Sigmoid colon (tissue), 7 donors: ENCODE measurements at regions of chr10 and their contacts with region 1.

Region 1: DNA sequence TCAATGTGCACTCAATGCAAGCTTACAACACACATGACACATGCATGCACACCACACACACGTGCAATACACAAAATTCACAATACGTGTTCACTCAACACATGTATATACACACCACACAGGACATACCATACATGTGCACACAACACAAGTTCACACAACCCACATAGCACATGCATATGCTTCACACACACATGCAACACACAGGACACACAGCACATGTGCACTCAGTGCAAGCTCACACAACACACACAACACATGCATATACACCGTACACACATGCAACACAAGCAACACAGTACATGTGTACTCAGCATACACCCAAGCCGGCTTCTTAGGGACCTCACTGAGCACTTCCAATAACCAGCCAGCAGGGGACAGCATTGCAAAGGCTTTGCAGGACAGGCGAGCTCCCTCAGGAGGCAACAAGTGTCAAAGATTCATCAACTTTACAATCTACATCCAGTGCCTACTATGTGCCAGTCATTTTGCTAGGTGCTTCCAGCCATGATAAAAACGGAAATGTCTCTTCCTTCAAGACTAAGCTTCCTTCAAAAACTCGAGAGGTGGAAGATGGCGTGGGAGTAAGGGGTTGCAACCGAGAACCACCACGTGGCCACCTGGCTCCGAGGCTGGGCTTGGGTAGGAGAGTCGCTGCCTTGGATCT is 61.1 kb downstream of the JCAD start:
- DNase-seq: peak; percentile 88
- H3K4me3 ChIP-seq: no peak overlapping the region
- H3K27ac ChIP-seq: no peak overlapping the region
- H3K4me1 ChIP-seq: peaks cover 0 to 51% (median 42%) of the 10 kb centered on the region in 4 donors
- H3K27me3 ChIP-seq: no peaks in the 10 kb centered on the region
- CTCF ChIP-seq: peak; percentile 96 to 100 (median 98)
- EP300 ChIP-seq: no peak
- POLR2A ChIP-seq: no peak

Region 2: DNA sequence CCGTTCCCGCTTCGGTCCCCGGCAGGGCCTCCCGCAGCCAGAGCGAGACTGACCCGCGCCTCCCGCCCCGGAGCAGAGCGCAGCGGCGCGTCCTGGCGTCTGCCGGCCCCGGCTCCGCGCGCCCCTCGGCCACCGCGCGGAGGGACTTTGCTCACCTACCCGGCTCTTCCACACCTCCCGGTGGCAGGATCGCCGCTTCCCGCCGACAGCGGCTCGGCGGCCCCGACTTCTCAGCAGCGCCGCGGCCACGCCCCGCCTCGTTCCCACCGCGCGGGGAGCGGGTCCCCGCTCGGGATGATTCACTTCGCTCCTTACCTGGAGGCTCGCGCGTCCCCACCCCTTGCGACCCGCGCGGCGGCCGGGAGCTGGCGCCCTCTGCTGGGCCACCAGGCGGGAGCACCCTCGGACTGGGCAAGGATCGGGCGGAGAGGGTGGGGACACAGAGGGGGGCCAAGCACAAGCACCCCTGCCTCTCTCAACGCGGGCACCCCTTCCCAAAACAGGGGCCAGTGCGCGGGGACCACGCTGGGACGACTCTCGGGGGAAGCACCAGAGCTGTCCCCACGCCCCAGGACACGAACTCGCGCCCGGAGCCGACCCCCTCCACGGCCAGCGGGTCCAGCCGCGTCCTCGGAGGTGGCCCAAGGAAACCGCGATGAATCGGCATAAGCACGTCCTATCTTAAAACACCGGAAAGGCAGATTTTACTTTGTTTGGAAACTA is 262.5 kb before region 1 on chr10:
- intact Hi-C with region 1: loop called (anchors 10 kb)
- DNase-seq: peak; percentile 96
- H3K4me3 ChIP-seq: peak overlapping the region; percentile 77 to 97 (median 88)
- H3K27ac ChIP-seq: peak overlapping the region; percentile 94 to 100 (median 98)
- H3K4me1 ChIP-seq: peaks cover 0 to 21% (median 15%) of the 10 kb centered on the region in 4 donors
- H3K27me3 ChIP-seq: no peaks in the 10 kb centered on the region
- CTCF ChIP-seq: peak; percentile 87 to 97 (median 92)
- EP300 ChIP-seq: no peak
- POLR2A ChIP-seq: peak in 1 of 2 donors; percentile 44

Region 3: DNA sequence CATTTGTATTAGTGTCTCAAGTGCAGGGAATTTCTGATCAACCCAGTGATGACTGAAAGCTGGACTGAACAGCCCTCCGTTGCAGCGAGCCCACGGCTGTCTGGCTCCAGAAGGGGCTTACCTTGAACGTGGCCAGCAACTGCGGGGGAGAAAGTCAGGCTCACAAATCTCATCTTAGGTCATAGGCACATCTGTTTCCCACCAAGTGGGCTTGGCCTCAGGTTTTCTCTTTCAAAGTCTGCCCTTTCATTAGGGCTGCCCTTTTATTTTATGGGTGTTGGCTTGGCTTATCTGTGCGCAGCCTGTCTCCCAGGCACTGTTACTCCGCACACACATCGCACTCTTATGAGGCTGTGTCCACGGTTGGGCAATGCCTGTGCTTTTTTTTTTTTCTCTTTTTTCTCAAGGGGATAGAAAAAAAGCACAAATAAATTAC is 116.9 kb before region 1 on chr10:
- intact Hi-C with region 1: no loop called
- DNase-seq: peak; percentile 74
- H3K4me3 ChIP-seq: no peak overlapping the region
- H3K27ac ChIP-seq: peak overlapping the region in 3 of 4 donors; percentile 33 to 53 (median 35)
- H3K4me1 ChIP-seq: peaks cover 0 to 30% (median 21%) of the 10 kb centered on the region in 4 donors
- H3K27me3 ChIP-seq: no peaks in the 10 kb centered on the region
- CTCF ChIP-seq: no peak
- EP300 ChIP-seq: no peak
- POLR2A ChIP-seq: no peak

Region 4: DNA sequence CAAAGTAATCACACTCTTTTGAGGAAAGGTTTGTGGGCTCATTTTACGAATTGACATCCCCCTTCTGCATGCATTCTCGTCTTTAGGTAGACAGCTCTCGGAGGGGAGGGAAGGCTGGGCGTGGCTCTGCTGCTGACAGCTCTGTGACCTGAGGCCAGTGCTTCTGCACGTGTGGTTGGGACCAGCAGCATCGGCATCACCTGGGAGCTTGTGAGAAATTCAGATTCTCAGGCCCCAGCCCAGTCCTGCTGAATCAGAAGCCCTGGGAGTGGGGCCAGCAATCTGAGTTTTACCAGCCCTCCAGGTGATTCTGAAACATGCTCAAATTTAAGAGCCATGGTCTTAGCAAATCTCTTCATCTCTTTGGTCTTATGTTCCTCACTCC is 28.3 kb before region 1 on chr10:
- intact Hi-C with region 1: no loop called
- DNase-seq: no peak
- H3K4me3 ChIP-seq: no peak overlapping the region
- H3K27ac ChIP-seq: peak overlapping the region in 2 of 4 donors; percentile 7 to 52
- H3K4me1 ChIP-seq: peaks cover 0 to 32% (median 27%) of the 10 kb centered on the region in 4 donors
- H3K27me3 ChIP-seq: no peaks in the 10 kb centered on the region
- CTCF ChIP-seq: no peak
- EP300 ChIP-seq: no peak
- POLR2A ChIP-seq: no peak

Region 5: GRCh38 chr10:29980084-29980483 is 18.2 kb before region 1 on chr10:
- intact Hi-C with region 1: no loop called
- DNase-seq: no peak
- H3K4me3 ChIP-seq: no peak overlapping the region
- H3K27ac ChIP-seq: peak overlapping the region in 1 of 4 donors; percentile 71
- H3K4me1 ChIP-seq: peaks cover 0 to 9% (median 6%) of the 10 kb centered on the region in 4 donors
- H3K27me3 ChIP-seq: no peaks in the 10 kb centered on the region
- CTCF ChIP-seq: no peak
- EP300 ChIP-seq: no peak
- POLR2A ChIP-seq: no peak

Region 6: GRCh38 chr10:30241422-30242110 is 243.3 kb after region 1 on chr10:
- intact Hi-C with region 1: loop called (anchors 5 kb)
- DNase-seq: no peak
- H3K4me3 ChIP-seq: no peak overlapping the region
- H3K27ac ChIP-seq: no peak overlapping the region
- H3K4me1 ChIP-seq: peaks cover 0 to 10% (median 5%) of the 10 kb centered on the region in 4 donors
- H3K27me3 ChIP-seq: no peaks in the 10 kb centered on the region
- CTCF ChIP-seq: no peak
- EP300 ChIP-seq: no peak
- POLR2A ChIP-seq: no peak

Region 7: DNA sequence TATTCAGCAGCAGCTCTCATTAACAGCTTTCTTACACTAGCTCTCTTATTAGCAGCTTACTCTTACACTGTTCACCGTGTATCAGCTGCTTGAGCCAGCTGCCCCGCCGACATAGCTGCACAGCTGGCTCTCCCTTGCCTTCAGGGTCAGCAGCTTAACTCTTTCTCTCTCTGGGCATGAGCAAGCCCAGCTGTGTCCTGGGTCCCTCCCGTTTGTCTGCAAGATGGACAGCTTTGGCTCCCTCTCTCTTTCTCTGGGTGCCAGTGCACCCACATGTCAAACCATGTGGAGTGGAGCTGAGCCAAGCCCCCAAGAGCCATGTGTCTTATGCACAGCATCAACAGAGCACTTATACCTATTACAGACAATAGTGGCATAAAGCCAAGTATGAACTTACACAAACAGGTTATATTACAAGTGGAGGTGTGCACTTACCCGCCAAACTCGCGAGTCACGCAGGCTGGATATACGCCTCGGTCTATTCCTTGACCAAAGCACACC is 386.5 kb after region 1 on chr10:
- intact Hi-C with region 1: loop called (anchors 10 kb)
- DNase-seq: no peak
- H3K4me3 ChIP-seq: no peak overlapping the region
- H3K27ac ChIP-seq: no peak overlapping the region
- H3K4me1 ChIP-seq: peaks cover 0 to 31% (median 16%) of the 10 kb centered on the region in 4 donors
- H3K27me3 ChIP-seq: no peaks in the 10 kb centered on the region
- CTCF ChIP-seq: peak in 1 of 4 experiments; percentile 32
- EP300 ChIP-seq: no peak
- POLR2A ChIP-seq: no peak

Region 8: GRCh38 chr10:30583778-30584415 is 585.6 kb after region 1 on chr10:
- intact Hi-C with region 1: loop called (anchors 10 kb)
- DNase-seq: peak; percentile 86
- H3K4me3 ChIP-seq: peak overlapping the region; percentile 18 to 41 (median 36)
- H3K27ac ChIP-seq: peak overlapping the region; percentile 72 to 84 (median 76)
- H3K4me1 ChIP-seq: peaks cover 0 to 15% (median 10%) of the 10 kb centered on the region in 4 donors
- H3K27me3 ChIP-seq: no peaks in the 10 kb centered on the region
- CTCF ChIP-seq: no peak
- EP300 ChIP-seq: no peak
- POLR2A ChIP-seq: no peak